H1 (cell line): ENCODE measurements at regions of chr14 and their contacts with region 1.

Region 1: DNA sequence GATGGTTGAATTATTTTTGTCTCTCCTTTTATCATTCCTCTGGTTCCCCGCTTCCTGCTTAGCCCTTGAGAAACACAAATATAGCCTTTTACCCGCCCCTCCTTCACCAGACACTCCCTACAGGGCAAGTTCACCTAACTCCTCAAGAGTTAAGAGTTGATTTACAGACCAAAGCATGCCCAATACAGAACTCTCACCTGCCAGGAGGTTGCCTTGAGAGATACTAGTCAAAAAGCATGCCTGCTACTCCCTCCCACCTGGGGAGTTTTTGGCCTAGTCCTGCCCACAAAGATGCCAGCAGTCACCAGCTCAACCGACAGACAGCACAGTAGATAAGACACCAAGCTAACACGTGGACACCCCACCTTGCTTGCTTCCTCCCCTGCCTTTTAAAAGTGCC is 11.2 kb downstream of the LGMN start:
- DNase-seq: no peak
- H3K4me3 ChIP-seq: no peak overlapping the region
- H3K27ac ChIP-seq: no peak overlapping the region
- H3K4me1 ChIP-seq: no peaks in the 10 kb centered on the region
- H3K27me3 ChIP-seq: no peaks in the 10 kb centered on the region
- CTCF ChIP-seq: no peak
- EP300 ChIP-seq: no peak
- POLR2A ChIP-seq: no peak
- RAD21 ChIP-seq: no peak

Region 2: GRCh38 chr14:92748259-92749016 is 11.2 kb after region 1 on chr14 and contains the start of gene LGMN:
- CTCF ChIA-PET with region 1: interaction called, 9 read pairs
- POLR2A ChIA-PET with region 1: interaction called, 19 read pairs
- DNase-seq: peak; percentile 82 to 92
- H3K4me3 ChIP-seq: peak within 1 kb of the TSS; percentile 74 to 90 (median 81)
- H3K27ac ChIP-seq: no peak within 1 kb of the TSS
- H3K4me1 ChIP-seq: peaks cover 0 to 3% (median 2%) of the 10 kb centered on the region in 4 experiments; a peak in 2 of 7 replicates
- H3K27me3 ChIP-seq: peaks cover 0 to 3% (median 0%) of the 10 kb centered on the region in 4 experiments; a peak in 2 of 7 replicates
- CTCF ChIP-seq: no peak
- EP300 ChIP-seq: no peak
- POLR2A ChIP-seq: peak; percentile 70 to 73
- RAD21 ChIP-seq: no peak
- total RNA-seq, gene LGMN: 57.4 and 57.9 TPM in 2 replicates